ENCODE measurements at regions of chr2 and their contacts with region 1.

Region 1: GRCh38 chr2:137838255-137839092 is 125.8 kb upstream of the HNMT start:
- DNase-seq: no peak
- H3K4me3 ChIP-seq: no peak overlapping the region
- H3K27ac ChIP-seq: no peak overlapping the region
- H3K4me1 ChIP-seq: no peaks in the 10 kb centered on the region
- H3K27me3 ChIP-seq: no peaks in the 10 kb centered on the region
- CTCF ChIP-seq: peak; percentile 55

Region 2: DNA sequence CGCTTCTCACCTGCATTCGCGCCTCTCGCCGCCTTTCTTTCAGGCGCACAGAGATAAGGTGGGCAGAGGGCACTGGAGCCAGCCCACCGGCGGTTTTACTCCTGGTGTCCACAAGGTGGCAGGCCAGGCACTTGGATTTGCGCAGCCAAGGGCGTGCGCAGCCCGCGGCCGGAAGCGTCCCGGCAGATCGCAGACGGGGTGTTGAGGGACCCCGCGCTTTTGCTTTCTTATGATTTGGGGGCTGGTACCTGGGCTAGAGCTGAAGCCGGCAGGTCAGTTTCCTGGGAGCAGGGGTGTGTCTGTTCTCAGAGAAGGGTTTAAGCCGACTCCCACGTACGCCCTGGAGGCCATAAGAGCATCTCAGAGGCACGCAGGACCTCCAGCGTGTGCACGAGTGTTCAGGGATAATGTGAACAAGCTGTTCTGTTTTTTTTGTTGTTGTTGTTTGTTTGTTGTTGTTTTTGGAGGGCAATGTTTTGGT is 1414.9 kb before region 1 on chr2:
- intact Hi-C with region 1: loop called (anchors 2 kb)
- DNase-seq: peak; percentile 61
- H3K4me3 ChIP-seq: peak overlapping the region; percentile 35
- H3K27ac ChIP-seq: no peak overlapping the region
- H3K4me1 ChIP-seq: no peaks in the 10 kb centered on the region
- H3K27me3 ChIP-seq: no peaks in the 10 kb centered on the region
- CTCF ChIP-seq: peak; percentile 85

Region 3: GRCh38 chr2:137467246-137467862 is 371.1 kb before region 1 on chr2:
- intact Hi-C with region 1: loop called (anchors 5 kb)
- DNase-seq: peak; percentile 33
- H3K4me3 ChIP-seq: no peak overlapping the region
- H3K27ac ChIP-seq: no peak overlapping the region
- H3K4me1 ChIP-seq: no peaks in the 10 kb centered on the region
- H3K27me3 ChIP-seq: no peaks in the 10 kb centered on the region
- CTCF ChIP-seq: peak; percentile 58

Region 4: GRCh38 chr2:137872577-137872976 is 34.1 kb after region 1 on chr2:
- intact Hi-C with region 1: no loop called
- DNase-seq: no peak
- H3K4me3 ChIP-seq: no peak overlapping the region
- H3K27ac ChIP-seq: no peak overlapping the region
- H3K4me1 ChIP-seq: no peaks in the 10 kb centered on the region
- H3K27me3 ChIP-seq: no peaks in the 10 kb centered on the region
- CTCF ChIP-seq: no peak

Region 5: DNA sequence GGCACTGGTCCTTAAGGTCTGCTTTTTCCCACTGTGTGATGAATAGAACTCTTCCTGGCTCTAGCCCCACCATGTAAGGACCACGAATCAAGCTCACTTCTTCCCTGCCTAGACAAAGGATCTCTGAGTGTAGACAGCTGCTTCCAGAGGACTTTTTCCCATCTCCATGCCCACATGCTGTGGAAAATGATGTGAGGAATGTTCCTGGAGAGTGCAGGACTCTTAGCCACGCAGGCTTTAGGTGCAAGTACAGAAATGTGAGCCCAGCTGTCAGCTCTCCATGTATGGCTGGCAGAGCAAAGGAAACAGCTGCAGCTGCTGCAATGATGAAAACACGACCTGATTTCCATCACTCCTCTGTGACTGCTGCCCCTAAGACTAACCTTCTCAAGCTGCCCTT is 906.2 kb after region 1 on chr2:
- intact Hi-C with region 1: no loop called
- DNase-seq: no peak
- H3K4me3 ChIP-seq: no peak overlapping the region
- H3K27ac ChIP-seq: no peak overlapping the region
- H3K4me1 ChIP-seq: no peaks in the 10 kb centered on the region
- H3K27me3 ChIP-seq: no peaks in the 10 kb centered on the region
- CTCF ChIP-seq: no peak

Measured in colonic mucosa (tissue), 4 donors.